ENCODE measurements at regions of chr7 and their contacts with region 1.

Region 1: GRCh38 chr7:27329911-27330310 is 87.3 kb downstream of the EVX1 start:
- DNase-seq: no peak
- ATAC-seq: no peak
- H3K4me3 ChIP-seq: no peak overlapping the region
- H3K27ac ChIP-seq: no peak overlapping the region
- H3K4me1 ChIP-seq: no peaks in the 10 kb centered on the region
- H3K27me3 ChIP-seq: no peaks in the 10 kb centered on the region
- CTCF ChIP-seq: peak in 1 of 5 experiments; percentile 19
- POLR2A ChIP-seq: no peak

Region 2: GRCh38 chr7:27242555-27243339 is 87.2 kb before region 1 on chr7 and contains the start of gene EVX1:
- in situ Hi-C with region 1: no loop called
- intact Hi-C with region 1: no loop called
- DNase-seq: no peak
- ATAC-seq: no peak
- H3K4me3 ChIP-seq: peak within 1 kb of the TSS; percentile 35 to 57 (median 38)
- H3K27ac ChIP-seq: no peak within 1 kb of the TSS
- H3K4me1 ChIP-seq: peaks cover 5 to 37% of the 10 kb centered on the region in 2 donors
- H3K27me3 ChIP-seq: peaks cover 93 to 96% (median 94%) of the 10 kb centered on the region in 3 donors
- CTCF ChIP-seq: no peak
- POLR2A ChIP-seq: no peak
- total RNA-seq, gene EVX1: not detected

Region 3: GRCh38 chr7:27364344-27365100 is 34.6 kb after region 1 on chr7:
- in situ Hi-C with region 1: no loop called
- intact Hi-C with region 1: no loop called
- DNase-seq: peak; percentile 29 to 65
- ATAC-seq: peak; percentile 91 to 96
- H3K4me3 ChIP-seq: no peak overlapping the region
- H3K27ac ChIP-seq: peak overlapping the region; percentile 55 to 73 (median 66)
- H3K4me1 ChIP-seq: peaks cover 7 to 13% of the 10 kb centered on the region in 2 donors
- H3K27me3 ChIP-seq: no peaks in the 10 kb centered on the region
- CTCF ChIP-seq: no peak
- POLR2A ChIP-seq: no peak

Region 4: DNA sequence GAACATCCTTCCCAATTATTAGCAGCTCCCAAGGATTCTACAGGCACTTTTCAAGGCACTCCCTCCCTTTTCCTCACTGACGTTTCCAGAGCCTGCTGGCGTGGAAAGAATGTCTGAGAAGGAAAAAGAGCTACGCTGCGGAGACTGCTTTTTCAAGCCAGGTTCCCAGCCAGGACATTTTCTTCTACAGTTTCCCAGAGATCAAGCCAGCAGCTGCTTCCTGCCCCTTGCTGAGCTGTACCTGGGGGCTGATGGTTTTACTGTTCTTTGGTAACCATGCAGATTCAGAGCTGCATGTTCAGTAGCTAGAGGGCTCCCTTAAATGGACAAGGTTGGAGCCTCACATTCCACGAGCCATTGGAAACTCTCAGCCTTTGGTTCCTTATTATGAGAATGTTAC is 46.0 kb after region 1 on chr7:
- in situ Hi-C with region 1: no loop called
- intact Hi-C with region 1: no loop called
- DNase-seq: no peak
- ATAC-seq: no peak
- H3K4me3 ChIP-seq: no peak overlapping the region
- H3K27ac ChIP-seq: no peak overlapping the region
- H3K4me1 ChIP-seq: no peaks in the 10 kb centered on the region
- H3K27me3 ChIP-seq: no peaks in the 10 kb centered on the region
- CTCF ChIP-seq: no peak
- POLR2A ChIP-seq: no peak

Region 5: DNA sequence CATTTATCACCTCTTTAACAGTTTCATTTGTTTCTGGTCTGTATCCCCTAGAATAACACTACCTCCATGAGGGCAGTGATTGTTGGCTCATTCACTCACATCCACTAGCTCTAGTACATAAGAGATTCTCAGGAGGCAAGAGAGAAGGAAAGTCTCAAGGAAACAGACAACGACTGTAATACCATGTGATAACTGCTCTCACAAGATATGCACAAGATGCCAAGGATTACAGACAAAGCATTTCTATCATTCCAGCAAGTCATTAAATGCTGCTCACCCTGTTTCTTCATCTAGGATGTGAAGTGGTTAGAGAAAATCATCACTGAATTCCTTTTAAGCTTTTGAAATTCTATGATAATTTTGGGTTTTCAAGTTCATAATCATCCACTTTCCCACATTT is 217.5 kb after region 1 on chr7:
- in situ Hi-C with region 1: no loop called
- intact Hi-C with region 1: loop called (anchors 5 kb)
- DNase-seq: no peak
- ATAC-seq: no peak
- H3K4me3 ChIP-seq: no peak overlapping the region
- H3K27ac ChIP-seq: no peak overlapping the region
- H3K4me1 ChIP-seq: no peaks in the 10 kb centered on the region
- H3K27me3 ChIP-seq: no peaks in the 10 kb centered on the region
- CTCF ChIP-seq: no peak
- POLR2A ChIP-seq: no peak

Measured in gastrocnemius medialis (tissue), 4 donors.